ENCODE measurements at regions of chr3 and their contacts with region 1.

Region 1: GRCh38 chr3:48240711-48241491 is at the start of gene ZNF589:
- DNase-seq: peak; percentile 94
- ATAC-seq: peak; percentile 98
- H3K4me3 ChIP-seq: peak within 1 kb of the TSS; percentile 76 to 97 (median 91)
- H3K27ac ChIP-seq: peak within 1 kb of the TSS; percentile 83
- H3K4me1 ChIP-seq: peaks cover 45% of the 10 kb centered on the region
- H3K27me3 ChIP-seq: no peaks in the 10 kb centered on the region
- CTCF ChIP-seq: peak; percentile 86
- EP300 ChIP-seq: no peak
- POLR2A ChIP-seq: peak; percentile 92 to 95
- RAD21 ChIP-seq: 0 out of 2 replicates have a peak, but pooled peaks have one; percentile 23
- total RNA-seq, gene ZNF589: 5.6 and 7.3 TPM in 2 replicates

Region 2: GRCh38 chr3:48180531-48181253 is 60.2 kb before region 1 on chr3:
- CTCF ChIA-PET with region 1: no interaction called
- POLR2A ChIA-PET with region 1: no interaction called
- in situ Hi-C with region 1: no loop called
- intact Hi-C with region 1: no loop called
- DNase-seq: no peak
- ATAC-seq: no peak
- H3K4me3 ChIP-seq: no peak overlapping the region
- H3K27ac ChIP-seq: no peak overlapping the region
- H3K4me1 ChIP-seq: peaks cover 41% of the 10 kb centered on the region
- H3K27me3 ChIP-seq: no peaks in the 10 kb centered on the region
- CTCF ChIP-seq: no peak
- EP300 ChIP-seq: no peak
- POLR2A ChIP-seq: no peak
- RAD21 ChIP-seq: no peak

Region 3: GRCh38 chr3:48194446-48195071 is 46.3 kb before region 1 on chr3:
- CTCF ChIA-PET with region 1: no interaction called
- POLR2A ChIA-PET with region 1: no interaction called
- in situ Hi-C with region 1: no loop called
- intact Hi-C with region 1: loop called (anchors 2 kb)
- DNase-seq: peak; percentile 68
- ATAC-seq: peak; percentile 65
- H3K4me3 ChIP-seq: no peak overlapping the region
- H3K27ac ChIP-seq: no peak overlapping the region
- H3K4me1 ChIP-seq: peaks cover 25% of the 10 kb centered on the region
- H3K27me3 ChIP-seq: peaks cover 0 to 10% of the 10 kb centered on the region in 2 experiments; a peak in 2 of 5 replicates
- CTCF ChIP-seq: peak; percentile 85
- EP300 ChIP-seq: no peak
- POLR2A ChIP-seq: no peak
- RAD21 ChIP-seq: peak; percentile 55; the same call in 1 of the 2 replicates

Region 4: GRCh38 chr3:48367201-48367600 is 126.3 kb after region 1 on chr3:
- CTCF ChIA-PET with region 1: no interaction called
- POLR2A ChIA-PET with region 1: no interaction called
- in situ Hi-C with region 1: no loop called
- intact Hi-C with region 1: no loop called
- DNase-seq: no peak
- ATAC-seq: peak; percentile 45; the same call in 2 of the 3 replicates
- H3K4me3 ChIP-seq: no peak overlapping the region
- H3K27ac ChIP-seq: no peak overlapping the region
- H3K4me1 ChIP-seq: no peaks in the 10 kb centered on the region
- H3K27me3 ChIP-seq: peaks cover 1 to 22% of the 10 kb centered on the region in 2 experiments; a peak in 2 of 5 replicates
- CTCF ChIP-seq: no peak
- EP300 ChIP-seq: no peak
- POLR2A ChIP-seq: no peak
- RAD21 ChIP-seq: no peak

Measured in HepG2 (cell line).